GM10248 (cell line): ENCODE measurements at regions of chr4 and their contacts with region 1.

Region 1: GRCh38 chr4:88659055-88659889 is 38.4 kb downstream of the NAP1L5 start:
- DNase-seq: peak; percentile 47
- CTCF ChIP-seq: peak; percentile 73

Region 2: GRCh38 chr4:88672987-88673386 is 13.7 kb after region 1 on chr4:
- CTCF ChIA-PET with region 1: interaction called, 11 read pairs
- POLR2A ChIA-PET with region 1: no interaction called
- DNase-seq: peak; percentile 16
- CTCF ChIP-seq: peak; percentile 55

Region 3: DNA sequence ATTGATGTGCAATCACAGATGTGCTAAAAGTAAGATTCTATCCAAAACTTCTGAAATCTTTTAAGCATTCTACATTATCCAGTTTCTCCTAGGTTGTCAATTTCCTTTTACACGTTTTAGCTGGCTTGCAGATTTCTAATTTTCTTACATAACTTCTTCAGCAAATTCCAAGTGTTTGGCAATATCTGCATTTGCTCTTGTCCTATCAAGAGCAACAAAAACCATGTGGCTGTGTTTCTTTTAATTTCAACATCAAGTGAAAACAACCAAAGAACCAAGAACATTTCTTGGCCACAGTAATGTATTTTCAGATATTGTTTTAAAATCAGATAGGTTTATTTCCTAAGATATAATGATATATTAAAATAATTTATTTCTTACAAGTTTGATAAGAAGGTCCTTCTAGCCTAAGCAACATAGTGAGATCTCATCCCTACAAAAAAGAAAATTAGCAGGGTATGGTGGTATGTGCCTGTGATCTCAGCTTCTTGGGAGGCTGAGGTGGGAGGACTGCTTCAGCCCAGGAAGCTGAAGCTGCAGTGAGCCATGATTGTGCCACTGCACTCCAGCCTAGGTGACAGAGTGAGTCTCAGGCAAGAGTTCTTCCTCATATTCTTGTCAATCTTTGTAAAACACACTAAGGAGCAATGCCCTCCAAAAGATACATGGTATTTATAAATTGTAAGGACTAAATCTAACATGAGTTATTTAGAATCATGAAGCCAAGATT is 169.7 kb after region 1 on chr4:
- CTCF ChIA-PET with region 1: no interaction called
- POLR2A ChIA-PET with region 1: no interaction called
- DNase-seq: no peak
- CTCF ChIP-seq: no peak